H1 (cell line): ENCODE measurements at regions of chr1 and their contacts with region 1.

Region 1: GRCh38 chr1:243475966-243476365 is 220.1 kb downstream of the SDCCAG8 start:
- DNase-seq: peak in 1 of 2 experiments; percentile 71
- H3K4me3 ChIP-seq: no peak overlapping the region
- H3K27ac ChIP-seq: no peak overlapping the region
- H3K4me1 ChIP-seq: peaks cover 12 to 37% (median 24%) of the 10 kb centered on the region in 4 experiments
- H3K27me3 ChIP-seq: no peaks in the 10 kb centered on the region; a peak in 1 of 7 replicates
- CTCF ChIP-seq: peak; percentile 55 to 75 (median 66)
- EP300 ChIP-seq: no peak
- POLR2A ChIP-seq: no peak
- RAD21 ChIP-seq: peak; percentile 88 to 92

Region 2: GRCh38 chr1:243459059-243459458 is 16.9 kb before region 1 on chr1:
- CTCF ChIA-PET with region 1: interaction called, 15 read pairs
- POLR2A ChIA-PET with region 1: no interaction called
- DNase-seq: no peak
- H3K4me3 ChIP-seq: no peak overlapping the region
- H3K27ac ChIP-seq: no peak overlapping the region
- H3K4me1 ChIP-seq: no peaks in the 10 kb centered on the region
- H3K27me3 ChIP-seq: no peaks in the 10 kb centered on the region
- CTCF ChIP-seq: no peak
- EP300 ChIP-seq: no peak
- POLR2A ChIP-seq: no peak
- RAD21 ChIP-seq: no peak

Region 3: GRCh38 chr1:243658594-243659105 is 182.7 kb after region 1 on chr1:
- CTCF ChIA-PET with region 1: no interaction called
- POLR2A ChIA-PET with region 1: no interaction called
- DNase-seq: no peak
- H3K4me3 ChIP-seq: no peak overlapping the region
- H3K27ac ChIP-seq: no peak overlapping the region
- H3K4me1 ChIP-seq: no peaks in the 10 kb centered on the region
- H3K27me3 ChIP-seq: no peaks in the 10 kb centered on the region
- CTCF ChIP-seq: no peak
- EP300 ChIP-seq: no peak
- POLR2A ChIP-seq: no peak
- RAD21 ChIP-seq: no peak